ENCODE measurements at regions of chr17 and their contacts with region 1.

Region 1: DNA sequence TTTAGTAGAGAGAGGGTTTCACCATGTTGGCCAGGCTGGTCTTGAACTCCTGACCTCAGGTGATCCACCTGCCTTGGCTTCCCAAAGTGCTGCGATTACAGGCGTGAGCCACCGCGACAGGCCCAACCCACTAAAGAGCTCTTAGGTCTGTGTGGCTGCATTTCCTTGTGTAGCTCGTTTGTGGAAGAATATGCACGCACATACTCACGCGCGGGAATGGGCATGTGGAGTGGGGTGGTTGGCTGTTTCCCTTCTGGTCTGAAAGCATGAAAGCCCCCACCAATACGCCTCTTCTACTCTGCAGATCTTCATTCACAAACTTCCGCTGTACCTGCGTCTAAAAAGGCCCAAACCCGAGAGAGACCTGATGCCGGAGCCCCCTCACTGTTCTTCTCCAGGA is 10.1 kb downstream of the CHRNB1 start:
- DNase-seq: no peak
- ATAC-seq: peak; percentile 26
- H3K4me3 ChIP-seq: peak overlapping the region; percentile 92
- H3K4me3 Mint-ChIP-seq: peak overlapping the region; percentile 89 to 96 (median 95)
- H3K27ac ChIP-seq: peak overlapping the region; percentile 77
- H3K27ac Mint-ChIP-seq: peak overlapping the region; percentile 86 to 97 (median 94)
- H3K4me1 ChIP-seq: peaks cover 17 to 20% of the 10 kb centered on the region in 2 donors
- H3K4me1 Mint-ChIP-seq: peaks cover 13 to 44% (median 36%) of the 10 kb centered on the region in 7 donors
- H3K27me3 ChIP-seq: no peaks in the 10 kb centered on the region
- H3K27me3 Mint-ChIP-seq: no peaks in the 10 kb centered on the region

Region 2: DNA sequence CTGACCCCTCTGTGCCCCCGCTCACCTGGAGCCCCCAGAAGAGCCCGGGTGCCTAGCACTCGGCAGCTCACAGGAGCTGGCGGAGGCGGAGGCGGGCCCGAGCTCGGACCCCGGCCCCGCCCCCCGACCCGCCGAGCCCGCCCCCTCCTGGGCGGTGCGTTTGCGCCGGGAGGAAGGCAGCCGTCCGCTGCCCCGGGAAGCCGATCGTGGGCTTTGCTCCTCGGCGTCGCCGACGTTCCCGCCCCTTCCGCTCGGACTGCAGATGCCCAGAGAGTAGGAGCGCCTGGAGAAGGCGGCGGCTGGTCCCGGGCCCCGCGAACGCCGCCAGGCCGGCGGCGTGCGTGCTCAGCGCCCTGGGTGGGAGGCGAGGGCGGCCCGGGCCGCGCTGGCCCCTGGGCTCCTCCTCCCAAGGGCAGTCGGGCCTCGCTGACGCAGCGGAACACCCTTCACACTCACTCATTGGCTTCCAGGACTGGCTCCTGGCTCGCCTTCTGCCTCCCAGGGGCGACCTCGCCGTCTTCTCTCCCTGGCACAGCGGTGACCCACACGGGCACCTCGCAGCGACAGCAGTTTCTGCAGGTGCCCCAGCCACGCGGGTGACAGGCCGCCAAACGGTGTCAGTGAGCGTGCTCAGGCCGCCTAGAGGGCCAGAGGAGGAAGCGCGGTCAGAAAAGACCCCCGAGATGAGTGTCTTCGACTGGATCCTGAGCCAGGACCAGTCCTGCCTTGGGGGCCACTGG is 60.4 kb before region 1 on chr17 and contains the start of gene PLSCR3:
- CTCF ChIA-PET with region 1: no interaction called
- POLR2A ChIA-PET with region 1: interaction called, 3 read pairs
- intact Hi-C with region 1: loop called in 1 of 2 experiments (anchors 5 kb)
- DNase-seq: peak; percentile 68 to 91 (median 82)
- ATAC-seq: peak; percentile 94
- H3K4me3 ChIP-seq: peak within 1 kb of the TSS; percentile 94
- H3K4me3 Mint-ChIP-seq: peak within 1 kb of the TSS; percentile 93 to 97 (median 95)
- H3K27ac ChIP-seq: peak within 1 kb of the TSS; percentile 87
- H3K27ac Mint-ChIP-seq: peak within 1 kb of the TSS; percentile 85 to 97 (median 92)
- H3K4me1 ChIP-seq: peaks cover 7 to 25% of the 10 kb centered on the region in 2 donors
- H3K4me1 Mint-ChIP-seq: peaks cover 25 to 46% (median 27%) of the 10 kb centered on the region in 7 donors
- H3K27me3 ChIP-seq: no peaks in the 10 kb centered on the region
- H3K27me3 Mint-ChIP-seq: no peaks in the 10 kb centered on the region
- total RNA-seq, gene PLSCR3: 74.8 to 142 (median 85.0) TPM

Region 3: GRCh38 chr17:7444682-7445618 is 10.0 kb before region 1 on chr17 and contains the start of gene CHRNB1:
- CTCF ChIA-PET with region 1: interaction called, 5 read pairs
- POLR2A ChIA-PET with region 1: interaction called, 79 read pairs
- intact Hi-C with region 1: loop called in 1 of 2 experiments (anchors 1 kb)
- DNase-seq: peak in 2 of 9 donors; percentile 23 to 49
- ATAC-seq: peak; percentile 74
- H3K4me3 ChIP-seq: peak within 1 kb of the TSS; percentile 30
- H3K4me3 Mint-ChIP-seq: peak within 1 kb of the TSS; percentile 75 to 89 (median 84)
- H3K27ac ChIP-seq: no peak within 1 kb of the TSS
- H3K27ac Mint-ChIP-seq: peak within 1 kb of the TSS in 5 of 9 donors; percentile 26 to 90 (median 39)
- H3K4me1 ChIP-seq: peaks cover 4 to 28% of the 10 kb centered on the region in 2 donors
- H3K4me1 Mint-ChIP-seq: peaks cover 23 to 39% (median 32%) of the 10 kb centered on the region in 7 donors
- H3K27me3 ChIP-seq: peaks cover 9 to 34% of the 10 kb centered on the region in 2 donors
- H3K27me3 Mint-ChIP-seq: peaks cover 44 to 68% (median 58%) of the 10 kb centered on the region in 5 donors
- total RNA-seq, gene CHRNB1: 6.0 to 14.6 (median 7.2) TPM

Region 4: GRCh38 chr17:7478276-7479153 is 23.5 kb after region 1 on chr17:
- CTCF ChIA-PET with region 1: interaction called, 7 read pairs
- POLR2A ChIA-PET with region 1: interaction called, 199 read pairs
- intact Hi-C with region 1: loop called (anchors 1 kb)
- DNase-seq: peak; percentile 53 to 83 (median 73)
- ATAC-seq: peak; percentile 56
- H3K4me3 ChIP-seq: peak overlapping the region; percentile 75
- H3K4me3 Mint-ChIP-seq: peak overlapping the region; percentile 90 to 99 (median 97)
- H3K27ac ChIP-seq: peak overlapping the region; percentile 100
- H3K27ac Mint-ChIP-seq: peak overlapping the region; percentile 90 to 99 (median 95)
- H3K4me1 ChIP-seq: peaks cover 26 to 49% of the 10 kb centered on the region in 2 donors
- H3K4me1 Mint-ChIP-seq: peaks cover 51 to 82% (median 70%) of the 10 kb centered on the region in 7 donors
- H3K27me3 ChIP-seq: no peaks in the 10 kb centered on the region
- H3K27me3 Mint-ChIP-seq: no peaks in the 10 kb centered on the region